Activated CD8-positive, alpha-beta T cell treated with anti-CD3 and anti-CD28 coated beads for 36 hours (primary cell): ENCODE measurements at regions of chr2 and their contacts with region 1.

Region 1: DNA sequence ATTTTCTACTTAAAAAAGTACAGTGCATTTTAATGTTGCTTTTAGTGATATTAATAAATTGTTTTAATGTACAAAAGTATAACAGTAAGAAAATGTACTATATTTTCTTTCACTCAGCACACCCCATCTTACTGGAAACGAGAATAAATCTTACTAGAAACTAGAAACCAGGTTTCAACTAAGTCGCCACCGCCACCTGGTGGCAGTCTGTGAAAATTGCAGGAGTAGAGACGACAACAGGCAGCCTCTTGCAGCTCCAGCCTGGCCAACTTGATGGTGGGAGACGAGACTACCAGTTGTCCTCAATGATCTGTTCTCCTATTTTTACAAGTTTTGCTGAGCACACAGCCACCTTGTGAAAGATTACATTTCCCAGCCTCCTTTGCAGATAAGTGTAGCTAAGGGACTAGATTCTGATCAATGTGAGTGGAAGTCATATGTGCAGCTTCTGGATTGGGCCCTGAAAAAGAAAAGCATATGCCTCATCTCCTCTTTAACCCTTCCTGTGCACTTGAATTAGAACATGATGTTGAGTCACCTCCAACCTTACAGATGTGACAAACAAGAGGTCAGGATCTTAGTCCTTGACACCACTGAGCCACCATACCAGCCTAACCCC is 8.7 kb downstream of the OTOF start:
- DNase-seq: peak; percentile 86
- ATAC-seq: peak; percentile 83
- H3K4me3 Mint-ChIP-seq: no peak overlapping the region
- H3K27ac Mint-ChIP-seq: no peak overlapping the region
- H3K4me1 Mint-ChIP-seq: no peaks in the 10 kb centered on the region
- H3K27me3 Mint-ChIP-seq: no peaks in the 10 kb centered on the region
- CTCF ChIP-seq: peak; percentile 98

Region 2: DNA sequence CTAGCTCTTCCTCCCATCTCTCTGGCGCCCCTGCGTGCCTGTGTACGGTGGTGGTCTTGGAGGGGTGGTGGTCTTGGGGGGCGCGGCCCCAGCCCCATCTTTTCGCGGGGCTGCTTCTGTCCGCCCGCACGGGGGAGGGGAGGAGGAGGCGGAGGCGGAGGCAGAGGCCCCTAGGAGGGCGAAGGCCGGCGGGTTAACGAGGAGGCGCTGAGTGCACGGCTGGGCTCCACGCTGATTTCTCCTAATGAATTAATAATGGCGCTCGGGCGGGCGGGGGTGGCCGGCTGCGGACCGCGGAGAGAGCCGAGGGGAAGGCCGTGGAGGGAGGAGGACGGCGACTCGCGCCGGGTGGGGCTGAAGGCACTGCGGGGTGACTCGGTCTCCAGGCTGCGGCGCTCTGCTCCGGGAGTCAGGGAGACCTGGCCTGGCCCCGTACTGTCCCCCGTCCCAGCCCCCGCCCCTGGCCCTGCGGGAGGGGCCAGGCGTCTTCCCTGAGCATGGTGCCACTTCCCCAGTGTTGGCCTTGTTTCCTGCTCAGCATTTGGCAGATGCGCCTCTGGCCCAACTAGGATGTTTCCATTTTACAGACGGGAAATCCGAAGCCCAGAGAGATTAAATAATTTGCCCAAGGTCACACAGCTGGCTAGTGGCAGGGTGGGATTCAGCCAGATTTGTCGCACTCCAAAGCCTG is 290.3 kb before region 1 on chr2:
- CTCF ChIA-PET with region 1: no interaction called
- POLR2A ChIA-PET with region 1: no interaction called
- intact Hi-C with region 1: loop called (anchors 10 kb)
- DNase-seq: no peak
- ATAC-seq: peak; percentile 23
- H3K4me3 Mint-ChIP-seq: peak overlapping the region; percentile 46
- H3K27ac Mint-ChIP-seq: no peak overlapping the region
- H3K4me1 Mint-ChIP-seq: peaks cover 13% of the 10 kb centered on the region
- H3K27me3 Mint-ChIP-seq: peaks cover 25% of the 10 kb centered on the region
- CTCF ChIP-seq: no peak